H1 (cell line): ENCODE measurements at regions of chr2 and their contacts with region 1.

Region 1: GRCh38 chr2:101001691-101002561 is at the start of gene RPL31:
- DNase-seq: peak; percentile 91 to 96
- H3K4me3 ChIP-seq: peak within 1 kb of the TSS; percentile 88 to 99 (median 94)
- H3K27ac ChIP-seq: peak within 1 kb of the TSS; percentile 91
- H3K4me1 ChIP-seq: peaks cover 5 to 10% (median 8%) of the 10 kb centered on the region in 4 experiments; a peak in 6 of 7 replicates
- H3K27me3 ChIP-seq: peaks cover 0 to 7% (median 2%) of the 10 kb centered on the region in 4 experiments; a peak in 3 of 7 replicates
- CTCF ChIP-seq: no peak; a peak in 1 of 4 replicates
- EP300 ChIP-seq: no peak
- POLR2A ChIP-seq: peak; percentile 86 to 99
- RAD21 ChIP-seq: no peak
- total RNA-seq, gene RPL31: 1,722 and 1,734 TPM in 2 replicates

Region 2: DNA sequence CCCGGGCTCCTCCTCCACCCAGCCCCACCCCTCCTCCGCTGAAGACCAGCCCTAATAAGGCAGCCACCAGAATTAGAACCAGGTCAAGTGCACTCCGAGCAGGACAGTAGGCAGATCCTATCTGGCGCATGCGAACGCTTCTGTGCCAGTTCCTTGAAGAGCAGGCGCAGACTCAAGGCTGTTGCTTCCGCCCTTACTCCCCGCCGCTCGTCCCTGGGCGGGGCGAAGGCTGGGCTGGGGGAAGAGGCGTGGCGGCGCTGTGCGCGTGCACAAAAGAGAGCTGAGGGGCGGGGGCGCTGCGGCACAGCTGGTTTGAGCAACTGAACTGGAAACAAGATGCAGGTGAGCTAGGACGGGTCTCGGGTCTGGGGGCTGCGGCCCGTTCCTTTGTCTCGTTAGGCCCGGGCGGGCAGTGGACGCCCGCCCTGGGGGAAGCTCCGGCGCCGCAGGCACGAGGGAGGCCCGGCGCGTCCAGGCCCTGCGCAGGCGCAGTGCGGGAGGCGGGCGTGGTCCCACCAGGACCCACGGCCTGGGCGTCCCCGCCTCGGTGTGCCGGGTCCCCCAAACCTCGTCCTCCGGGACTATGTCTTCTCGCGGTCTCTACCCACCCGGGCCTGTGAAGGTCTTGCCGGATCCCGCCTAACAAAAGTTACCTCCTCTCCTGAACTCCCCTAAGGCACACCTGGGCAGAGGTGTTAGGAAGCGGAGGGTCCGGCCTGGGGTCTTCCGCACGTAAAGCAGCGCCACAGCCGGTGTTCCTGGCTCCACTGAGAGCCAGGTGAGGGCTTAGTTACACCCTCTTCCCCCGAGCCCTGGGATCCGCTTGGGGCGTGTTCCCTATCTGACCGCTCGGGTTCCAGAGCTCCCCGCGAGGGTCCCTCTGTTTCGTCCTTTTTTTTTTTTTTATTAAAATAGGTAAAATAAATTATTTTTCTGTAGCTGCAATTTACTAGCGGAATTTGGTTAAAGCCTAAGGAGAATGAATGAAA is 438.9 kb before region 1 on chr2 and contains the start of gene PDCL3:
- CTCF ChIA-PET with region 1: no interaction called
- POLR2A ChIA-PET with region 1: interaction called, 25 read pairs
- DNase-seq: peak; percentile 93 to 95
- H3K4me3 ChIP-seq: peak within 1 kb of the TSS; percentile 83 to 98 (median 94)
- H3K27ac ChIP-seq: peak within 1 kb of the TSS; percentile 95
- H3K4me1 ChIP-seq: peaks cover 2 to 7% (median 5%) of the 10 kb centered on the region in 4 experiments; a peak in 5 of 7 replicates
- H3K27me3 ChIP-seq: no peaks in the 10 kb centered on the region
- CTCF ChIP-seq: no peak
- EP300 ChIP-seq: no peak
- POLR2A ChIP-seq: peak; percentile 66 to 95
- RAD21 ChIP-seq: no peak
- total RNA-seq, gene PDCL3: 29.4 TPM in 2 replicates

Region 3: GRCh38 chr2:100953406-100954043 is 48.4 kb before region 1 on chr2:
- CTCF ChIA-PET with region 1: no interaction called
- POLR2A ChIA-PET with region 1: no interaction called
- DNase-seq: no peak
- H3K4me3 ChIP-seq: no peak overlapping the region
- H3K27ac ChIP-seq: no peak overlapping the region
- H3K4me1 ChIP-seq: peaks cover 0 to 9% (median 4%) of the 10 kb centered on the region in 4 experiments; a peak in 5 of 7 replicates
- H3K27me3 ChIP-seq: no peaks in the 10 kb centered on the region
- CTCF ChIP-seq: no peak
- EP300 ChIP-seq: no peak
- POLR2A ChIP-seq: no peak
- RAD21 ChIP-seq: no peak

Region 4: DNA sequence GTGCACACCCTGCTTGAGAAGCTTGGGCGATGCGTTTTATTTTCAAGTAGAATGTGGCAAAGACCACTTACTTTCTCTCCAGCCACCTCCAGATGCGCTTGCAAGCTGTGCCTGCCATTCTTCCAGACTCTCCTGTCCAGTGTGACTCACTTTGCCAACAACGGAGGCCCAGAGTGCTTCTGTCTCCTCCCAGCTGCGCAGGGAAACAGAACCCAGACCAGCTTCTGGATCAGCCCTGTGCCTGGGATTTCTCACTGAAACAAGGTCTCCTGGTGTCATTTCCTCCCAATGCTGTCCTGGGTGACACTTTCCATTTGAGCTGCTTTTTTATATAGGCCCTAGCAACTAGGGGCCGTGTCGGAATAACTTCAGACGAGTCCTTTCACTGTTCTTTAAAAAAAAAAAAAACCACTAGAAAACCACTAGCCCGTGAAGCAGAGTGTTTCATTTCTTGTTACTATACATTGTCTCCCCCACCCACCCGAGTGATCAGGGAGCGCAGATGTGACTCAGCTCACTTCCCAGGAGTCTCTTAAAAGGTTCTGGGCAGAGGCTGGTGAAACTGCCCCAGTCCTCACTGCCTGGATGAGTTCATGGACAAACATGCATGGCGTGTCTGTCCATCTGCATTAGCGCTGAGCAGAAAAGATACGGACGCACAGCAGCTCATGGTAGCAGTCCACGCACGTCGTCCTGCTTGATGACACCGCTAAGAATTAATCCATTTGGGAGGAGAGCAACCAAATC is 25.1 kb before region 1 on chr2:
- CTCF ChIA-PET with region 1: no interaction called
- POLR2A ChIA-PET with region 1: interaction called, 12 read pairs
- DNase-seq: no peak
- H3K4me3 ChIP-seq: no peak overlapping the region
- H3K27ac ChIP-seq: no peak overlapping the region
- H3K4me1 ChIP-seq: peaks cover 0 to 2% (median 0%) of the 10 kb centered on the region in 4 experiments; a peak in 2 of 7 replicates
- H3K27me3 ChIP-seq: no peaks in the 10 kb centered on the region
- CTCF ChIP-seq: no peak
- EP300 ChIP-seq: no peak
- POLR2A ChIP-seq: no peak
- RAD21 ChIP-seq: no peak

Region 5: GRCh38 chr2:101012706-101013181 is 10.8 kb after region 1 on chr2:
- CTCF ChIA-PET with region 1: interaction called, 4 read pairs
- POLR2A ChIA-PET with region 1: interaction called, 14 read pairs
- DNase-seq: peak in 1 of 2 experiments; percentile 60
- H3K4me3 ChIP-seq: no peak overlapping the region
- H3K27ac ChIP-seq: no peak overlapping the region
- H3K4me1 ChIP-seq: no peaks in the 10 kb centered on the region; a peak in 1 of 7 replicates
- H3K27me3 ChIP-seq: no peaks in the 10 kb centered on the region
- CTCF ChIP-seq: peak in 2 of 3 experiments; percentile 55 to 77; a peak in 3 of 4 replicates
- EP300 ChIP-seq: no peak
- POLR2A ChIP-seq: no peak
- RAD21 ChIP-seq: peak; percentile 84 to 89

Region 6: DNA sequence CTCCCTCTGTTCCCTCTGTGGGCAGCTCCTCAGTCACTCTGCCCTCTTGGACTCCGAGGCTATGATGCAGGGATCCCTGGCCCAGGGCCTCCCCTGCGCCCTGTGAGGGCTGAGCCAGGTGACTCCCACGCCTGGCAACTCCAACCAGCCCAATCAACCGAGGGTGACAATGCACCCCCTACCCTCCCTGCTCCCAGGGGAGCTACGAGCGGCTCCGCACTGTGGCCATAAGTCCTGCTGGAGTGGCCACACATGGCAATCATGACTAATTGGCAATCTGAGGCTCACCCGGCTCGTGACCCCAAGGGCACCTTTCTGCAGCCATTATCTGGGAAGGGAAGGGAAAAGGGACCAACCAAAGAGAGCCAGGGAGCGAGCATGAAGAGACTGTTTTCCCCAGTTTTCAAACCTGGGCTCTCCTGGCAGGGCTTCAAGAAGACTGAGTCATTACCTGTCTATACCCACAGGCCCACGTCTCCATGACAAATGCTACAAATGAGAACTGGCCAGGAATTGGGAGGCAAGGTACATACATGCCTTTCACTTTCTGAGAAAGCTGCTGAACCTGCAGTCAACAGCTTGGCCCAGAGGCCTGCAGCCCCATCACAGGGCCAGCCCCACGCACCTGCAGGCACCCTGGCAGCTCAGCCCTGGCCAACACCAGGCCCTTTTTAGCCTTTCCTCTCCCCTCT is 45.3 kb after region 1 on chr2:
- CTCF ChIA-PET with region 1: no interaction called
- POLR2A ChIA-PET with region 1: interaction called, 11 read pairs
- DNase-seq: no peak
- H3K4me3 ChIP-seq: no peak overlapping the region
- H3K27ac ChIP-seq: no peak overlapping the region
- H3K4me1 ChIP-seq: peaks cover 0 to 7% (median 1%) of the 10 kb centered on the region in 4 experiments; a peak in 4 of 7 replicates
- H3K27me3 ChIP-seq: no peaks in the 10 kb centered on the region
- CTCF ChIP-seq: no peak
- EP300 ChIP-seq: no peak
- POLR2A ChIP-seq: no peak
- RAD21 ChIP-seq: no peak

Region 7: DNA sequence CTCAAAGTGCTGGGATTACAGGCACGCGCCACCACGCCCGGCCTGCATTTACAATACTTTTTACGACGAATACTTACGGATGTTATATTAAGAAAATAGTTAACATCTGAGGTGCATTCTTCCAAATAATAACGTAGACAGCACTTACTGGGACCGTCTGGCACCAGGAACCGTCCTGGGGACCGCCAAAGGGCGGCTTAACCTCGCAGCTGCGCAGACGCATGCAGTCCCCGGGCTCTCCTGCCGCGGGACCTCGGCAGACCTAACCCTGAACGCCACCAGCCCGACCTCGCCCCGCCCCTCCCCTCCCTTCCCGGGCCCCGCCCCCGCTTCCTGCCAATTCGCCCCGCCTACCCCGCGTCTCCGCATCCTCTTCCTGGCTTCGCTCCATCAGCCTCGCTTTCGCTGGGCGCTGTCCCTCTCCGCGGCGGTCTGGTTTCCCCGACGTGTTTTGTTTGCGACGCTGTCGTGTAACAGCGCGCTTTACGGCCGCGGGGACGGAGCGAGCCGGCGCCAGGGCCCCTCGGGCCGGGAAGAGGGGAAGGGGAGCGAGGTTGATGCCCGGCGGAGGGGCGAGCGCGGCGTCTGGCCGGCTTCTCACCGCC is 250.6 kb after region 1 on chr2 and contains the start of gene CNOT11:
- CTCF ChIA-PET with region 1: interaction called, 4 read pairs
- POLR2A ChIA-PET with region 1: interaction called, 15 read pairs
- DNase-seq: peak; percentile 95 to 97
- H3K4me3 ChIP-seq: peak within 1 kb of the TSS; percentile 77 to 94 (median 90)
- H3K27ac ChIP-seq: peak within 1 kb of the TSS; percentile 70; the same call in 1 of the 2 replicates
- H3K4me1 ChIP-seq: peaks cover 0 to 18% (median 10%) of the 10 kb centered on the region in 4 experiments; a peak in 4 of 7 replicates
- H3K27me3 ChIP-seq: no peaks in the 10 kb centered on the region
- CTCF ChIP-seq: no peak
- EP300 ChIP-seq: no peak
- POLR2A ChIP-seq: peak; percentile 81 to 86
- RAD21 ChIP-seq: no peak
- total RNA-seq, gene CNOT11: 54.6 and 56.5 TPM in 2 replicates